ENCODE measurements at regions of chr1 and their contacts with region 1.

Region 1: GRCh38 chr1:79741720-79742421 is 735.3 kb upstream of the ADGRL4 start:
- DNase-seq: no peak
- H3K4me3 ChIP-seq: no peak overlapping the region
- H3K27ac ChIP-seq: no peak overlapping the region
- H3K4me1 ChIP-seq: no peaks in the 10 kb centered on the region
- H3K27me3 ChIP-seq: no peaks in the 10 kb centered on the region
- CTCF ChIP-seq: no peak
- POLR2A ChIP-seq: no peak

Region 2: GRCh38 chr1:81097866-81098265 is 1356.0 kb after region 1 on chr1:
- intact Hi-C with region 1: loop called (anchors 5 kb)
- DNase-seq: no peak
- H3K4me3 ChIP-seq: no peak overlapping the region
- H3K27ac ChIP-seq: no peak overlapping the region
- H3K4me1 ChIP-seq: no peaks in the 10 kb centered on the region
- H3K27me3 ChIP-seq: no peaks in the 10 kb centered on the region
- CTCF ChIP-seq: no peak
- POLR2A ChIP-seq: no peak

Measured in vagina (tissue), 2 donors.